ENCODE measurements at regions of chr10 and their contacts with region 1.

Region 1: GRCh38 chr10:4849555-4850242 is 23.7 kb downstream of the AKR1E2 start:
- DNase-seq: peak; percentile 79
- H3K4me3 ChIP-seq: no peak overlapping the region
- CTCF ChIP-seq: peak; percentile 99

Region 2: DNA sequence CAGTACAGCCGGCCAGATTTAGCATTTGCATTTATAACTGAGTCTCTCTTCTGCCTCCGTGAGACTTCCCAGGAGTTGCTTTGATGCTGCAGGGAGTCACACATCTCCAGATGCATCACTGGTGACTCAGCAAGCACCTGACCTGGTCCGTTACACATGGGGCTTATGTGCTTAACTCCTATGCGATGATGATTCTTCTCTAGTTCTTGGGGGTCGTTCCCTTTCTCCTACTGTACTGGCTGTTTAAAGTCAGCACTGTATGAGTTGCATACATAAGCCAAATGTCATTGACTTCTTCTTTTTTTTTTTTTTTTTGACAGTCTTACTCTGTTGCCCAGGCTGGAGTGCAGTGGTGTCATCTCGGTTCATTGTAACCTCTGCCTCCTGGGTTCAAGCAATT is 36.7 kb before region 1 on chr10:
- CTCF ChIA-PET with region 1: interaction called, 58 read pairs
- POLR2A ChIA-PET with region 1: no interaction called
- DNase-seq: peak; percentile 21
- H3K4me3 ChIP-seq: no peak overlapping the region
- CTCF ChIP-seq: no peak

Region 3: DNA sequence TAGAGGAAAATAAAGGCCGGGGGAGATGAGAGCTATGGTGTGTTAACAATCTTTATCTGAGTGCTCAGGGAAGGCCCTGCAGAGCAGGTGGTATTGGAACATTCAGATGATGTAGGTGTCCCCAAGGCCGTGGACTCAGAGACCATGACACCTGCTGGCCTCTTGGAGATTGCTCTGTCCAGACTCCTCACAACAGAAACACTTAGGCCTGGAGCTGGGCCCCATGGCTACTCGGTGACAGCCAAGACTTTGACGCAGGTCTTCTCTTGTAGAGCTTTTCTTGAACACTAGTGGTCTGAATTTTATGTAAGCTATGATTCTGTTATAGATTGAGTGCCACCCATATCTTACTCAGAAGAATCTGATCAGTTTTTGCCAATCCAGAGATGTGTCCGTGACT is 10.3 kb before region 1 on chr10:
- CTCF ChIA-PET with region 1: interaction called, 83 read pairs
- POLR2A ChIA-PET with region 1: no interaction called
- DNase-seq: no peak
- H3K4me3 ChIP-seq: no peak overlapping the region
- CTCF ChIP-seq: no peak

Region 4: GRCh38 chr10:4947635-4948596 is 98.2 kb after region 1 on chr10:
- CTCF ChIA-PET with region 1: interaction called, 13 read pairs
- POLR2A ChIA-PET with region 1: no interaction called
- DNase-seq: peak; percentile 80
- H3K4me3 ChIP-seq: no peak overlapping the region
- CTCF ChIP-seq: no peak

Region 5: GRCh38 chr10:5283305-5284158 is 433.8 kb after region 1 on chr10:
- CTCF ChIA-PET with region 1: interaction called, 146 read pairs
- POLR2A ChIA-PET with region 1: no interaction called
- DNase-seq: no peak
- H3K4me3 ChIP-seq: no peak overlapping the region
- CTCF ChIP-seq: peak; percentile 70

Region 6: DNA sequence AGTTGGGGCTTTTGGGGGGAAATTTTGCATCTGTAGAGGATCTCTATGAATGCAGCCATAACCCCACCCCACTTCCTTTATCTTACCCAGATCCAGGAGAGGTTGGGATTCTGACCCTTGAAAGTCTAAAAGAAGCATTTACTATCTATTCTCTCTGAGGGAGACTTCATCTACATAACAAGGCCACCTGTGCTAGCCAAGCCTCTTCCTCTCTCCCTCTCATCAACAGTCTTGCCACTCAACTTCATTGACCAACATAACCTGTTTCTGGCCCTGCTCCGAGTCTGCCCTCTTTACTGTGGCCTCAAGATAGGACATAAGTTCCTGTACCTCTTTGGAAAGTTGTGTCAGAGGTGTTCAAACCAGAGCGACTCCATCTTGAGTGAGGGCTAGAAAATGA is 535.5 kb after region 1 on chr10:
- CTCF ChIA-PET with region 1: interaction called, 25 read pairs
- POLR2A ChIA-PET with region 1: no interaction called
- DNase-seq: no peak
- H3K4me3 ChIP-seq: no peak overlapping the region
- CTCF ChIP-seq: no peak

Region 7: DNA sequence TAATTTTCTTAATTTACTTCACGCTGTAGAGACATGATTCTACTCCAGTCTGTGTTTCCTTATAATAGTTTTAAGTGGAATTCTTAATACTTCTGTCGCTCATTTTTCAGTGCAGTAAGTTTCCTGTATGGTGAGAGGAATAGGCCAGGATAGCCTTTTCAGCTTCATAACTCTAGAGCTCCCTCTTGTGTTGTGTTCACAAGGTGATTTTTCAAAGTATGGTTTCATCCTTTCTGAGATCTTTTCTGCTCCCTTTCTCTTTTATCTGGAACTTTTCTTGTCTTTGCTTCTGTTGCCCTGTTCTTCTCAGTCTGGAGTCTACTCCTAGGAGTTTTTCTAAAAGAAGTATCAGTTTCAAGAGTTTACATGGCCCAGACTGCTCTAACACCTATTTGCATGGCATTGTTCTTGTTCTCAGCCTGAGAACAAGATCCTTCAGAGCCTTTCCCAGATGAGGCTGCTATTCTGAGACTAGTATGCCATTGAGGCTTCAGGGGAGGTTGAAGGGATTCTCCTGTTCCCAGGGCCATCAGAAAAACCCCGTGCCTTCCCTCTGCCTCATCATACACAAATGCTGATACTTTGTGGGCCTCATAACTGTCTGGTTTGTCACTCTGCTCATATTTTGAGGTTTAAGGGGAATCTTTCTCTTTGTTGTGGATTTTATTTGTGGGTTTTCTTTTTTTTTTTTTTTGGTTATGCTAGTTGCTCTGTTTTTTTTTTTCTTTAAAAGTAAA is 584.5 kb after region 1 on chr10:
- CTCF ChIA-PET with region 1: interaction called, 102 read pairs
- POLR2A ChIA-PET with region 1: no interaction called
- DNase-seq: peak; percentile 53
- H3K4me3 ChIP-seq: no peak overlapping the region
- CTCF ChIP-seq: peak; percentile 51